ENCODE measurements at regions of chr2 and their contacts with region 1.

Region 1: DNA sequence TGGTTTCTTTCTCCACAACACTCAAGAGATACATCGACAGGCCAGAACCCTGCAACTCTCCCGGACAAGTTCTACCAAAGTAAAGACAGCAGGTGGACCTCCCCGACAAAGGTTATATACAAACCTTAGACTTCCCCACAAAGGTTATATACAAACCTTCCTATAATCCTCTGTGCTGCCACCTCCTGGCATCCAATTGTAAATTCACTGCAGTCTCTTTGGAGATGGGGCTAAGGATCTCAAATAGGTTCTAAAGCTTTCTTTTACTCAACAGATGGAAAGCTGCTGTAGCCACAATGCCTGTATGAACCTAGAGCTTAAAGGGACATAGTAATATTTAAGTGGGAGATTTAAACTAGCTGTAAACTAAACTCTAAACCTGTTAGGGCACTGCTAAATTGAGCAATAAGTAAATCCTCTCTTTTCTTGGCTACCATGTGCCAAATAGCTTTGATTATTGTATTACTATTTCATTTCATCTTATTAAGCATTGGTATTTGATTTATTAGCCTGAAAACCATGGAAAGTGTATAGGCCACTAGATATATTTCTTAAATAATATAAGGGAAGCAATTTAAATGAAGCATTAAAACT is 9.8 kb upstream of the MREG start:
- DNase-seq: no peak
- H3K4me3 ChIP-seq: no peak overlapping the region
- H3K27ac ChIP-seq: no peak overlapping the region
- H3K27me3 ChIP-seq: no peaks in the 10 kb centered on the region
- CTCF ChIP-seq: peak; percentile 80

Region 2: GRCh38 chr2:215949991-215950404 is 73.2 kb before region 1 on chr2:
- CTCF ChIA-PET with region 1: interaction called, 53 read pairs
- POLR2A ChIA-PET with region 1: no interaction called
- DNase-seq: no peak
- H3K4me3 ChIP-seq: no peak overlapping the region
- H3K27ac ChIP-seq: no peak overlapping the region
- H3K27me3 ChIP-seq: no peaks in the 10 kb centered on the region
- CTCF ChIP-seq: peak; percentile 63

Region 3: DNA sequence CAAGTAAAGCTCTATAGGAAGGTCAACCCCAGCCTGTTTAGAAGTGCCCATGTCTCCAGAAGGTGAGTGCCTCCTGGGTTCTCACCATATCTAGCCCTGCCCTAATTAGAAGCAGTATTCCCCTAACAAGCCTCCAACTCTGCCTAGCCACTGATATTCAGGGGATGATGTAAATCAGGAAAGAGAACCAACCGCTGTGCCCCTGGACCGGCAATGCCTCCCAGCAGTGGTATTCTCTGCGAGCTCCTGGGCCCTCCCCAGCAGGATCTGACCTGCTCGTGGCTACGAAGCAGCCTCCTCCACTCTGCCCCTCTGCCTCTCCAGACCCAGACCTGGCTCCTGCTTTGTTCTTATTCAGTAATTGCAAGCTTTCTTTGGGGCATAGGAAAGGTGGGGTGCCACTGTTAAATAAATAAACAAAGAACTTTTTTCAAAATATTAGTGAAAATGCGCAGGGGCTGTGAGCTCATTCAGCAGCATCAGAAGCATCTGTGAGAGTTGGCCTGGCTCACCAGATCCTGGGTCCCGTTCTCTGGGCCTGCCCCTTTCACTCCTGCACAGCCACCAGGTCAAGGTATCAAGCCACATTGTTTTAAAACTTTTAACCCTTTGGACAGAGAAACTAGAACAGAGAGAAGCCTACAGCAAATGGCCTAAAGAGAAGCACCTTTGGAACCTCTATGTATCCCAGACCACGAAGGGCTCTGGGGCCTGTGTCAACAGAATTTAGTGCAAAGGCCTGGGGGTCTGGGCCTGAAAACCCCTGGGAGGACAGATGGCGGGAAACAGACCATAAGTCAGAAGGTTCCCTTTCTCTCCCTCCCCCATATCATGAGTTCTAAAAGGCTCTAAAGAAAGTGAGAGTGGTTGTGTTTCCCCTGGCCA is 21.7 kb before region 1 on chr2:
- CTCF ChIA-PET with region 1: interaction called, 10 read pairs
- POLR2A ChIA-PET with region 1: no interaction called
- DNase-seq: no peak
- H3K4me3 ChIP-seq: no peak overlapping the region
- H3K27ac ChIP-seq: no peak overlapping the region
- H3K27me3 ChIP-seq: no peaks in the 10 kb centered on the region
- CTCF ChIP-seq: no peak

Region 4: GRCh38 chr2:216034065-216034464 is 10.9 kb after region 1 on chr2:
- CTCF ChIA-PET with region 1: interaction called, 59 read pairs
- POLR2A ChIA-PET with region 1: no interaction called
- DNase-seq: peak; percentile 42
- H3K4me3 ChIP-seq: no peak overlapping the region
- H3K27ac ChIP-seq: no peak overlapping the region
- H3K27me3 ChIP-seq: no peaks in the 10 kb centered on the region
- CTCF ChIP-seq: peak; percentile 88

Region 5: GRCh38 chr2:216533609-216534008 is 510.5 kb after region 1 on chr2:
- CTCF ChIA-PET with region 1: no interaction called
- POLR2A ChIA-PET with region 1: no interaction called
- DNase-seq: no peak
- H3K4me3 ChIP-seq: no peak overlapping the region
- H3K27ac ChIP-seq: peak overlapping the region; percentile 24
- H3K27me3 ChIP-seq: no peaks in the 10 kb centered on the region
- CTCF ChIP-seq: no peak

Measured in AG04450 (cell line).